Activated B cell treated with CpG ODN at 0.5 μM for 24 hours (primary cell): ENCODE measurements at regions of chr5 and their contacts with region 1.

Region 1: GRCh38 chr5:34838785-34839714 is at the start of gene TTC23L:
- DNase-seq: peak; percentile 88
- ATAC-seq: peak; percentile 89
- H3K4me3 Mint-ChIP-seq: peak within 1 kb of the TSS; percentile 94
- H3K27ac Mint-ChIP-seq: peak within 1 kb of the TSS; percentile 96
- H3K4me1 Mint-ChIP-seq: peaks cover 13% of the 10 kb centered on the region
- H3K27me3 Mint-ChIP-seq: peaks cover 2% of the 10 kb centered on the region
- CTCF ChIP-seq: no peak
- total RNA-seq, gene TTC23L: not detected in 2 replicates

Region 2: DNA sequence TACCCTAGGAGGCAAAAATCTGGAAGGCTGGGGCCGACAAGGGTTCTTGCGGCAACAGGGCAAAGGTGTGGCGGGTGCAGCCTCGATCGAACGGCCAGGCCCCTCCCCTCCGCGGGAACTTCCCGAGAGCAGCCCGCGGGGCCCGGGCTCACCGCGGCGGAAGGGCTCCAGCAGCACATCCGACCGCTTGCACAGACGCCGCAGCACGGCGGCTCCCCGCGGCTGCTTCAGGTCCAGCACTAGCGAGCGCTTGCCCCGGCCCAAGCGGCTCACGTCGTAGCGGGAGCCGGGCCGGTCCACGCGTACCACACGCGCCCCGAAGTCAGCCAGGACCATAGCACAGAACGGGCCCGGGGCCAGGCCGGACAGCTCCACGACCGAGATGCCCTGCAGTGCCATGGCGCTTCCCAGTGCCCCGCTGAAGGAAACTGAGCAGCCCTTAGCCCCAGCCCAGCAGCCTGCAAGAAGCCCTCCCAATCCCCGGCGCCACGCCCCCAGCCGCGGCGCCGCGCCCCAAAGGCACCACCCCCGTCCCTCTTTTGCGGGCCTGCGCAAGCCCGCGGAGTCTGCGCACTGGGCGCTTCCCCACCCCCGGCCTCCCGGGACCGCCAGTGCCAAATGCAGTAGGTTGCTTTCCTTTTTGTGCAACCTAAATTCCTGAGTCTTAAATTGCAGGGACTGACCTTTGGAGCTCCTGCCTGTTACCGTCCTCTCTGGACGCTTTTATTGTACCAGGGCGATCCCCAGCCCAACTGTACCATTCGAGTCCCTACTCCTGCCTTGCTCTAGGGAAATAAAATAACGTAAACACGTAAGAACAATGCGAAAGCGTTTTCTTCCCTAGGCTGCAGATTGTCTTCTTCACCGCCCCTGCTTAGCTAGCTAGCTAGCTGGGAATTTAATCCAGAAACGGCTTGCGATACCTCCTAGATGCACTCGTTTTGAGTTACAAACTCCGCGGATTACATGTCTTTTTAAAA is 831.1 kb before region 1 on chr5 and contains the start of gene AMACR:
- CTCF ChIA-PET with region 1: no interaction called
- POLR2A ChIA-PET with region 1: interaction called, 4 read pairs
- intact Hi-C with region 1: loop called (anchors 1 kb)
- DNase-seq: peak; percentile 90
- ATAC-seq: peak; percentile 92
- H3K4me3 Mint-ChIP-seq: peak within 1 kb of the TSS; percentile 95
- H3K27ac Mint-ChIP-seq: peak within 1 kb of the TSS; percentile 91
- H3K4me1 Mint-ChIP-seq: peaks cover 23% of the 10 kb centered on the region
- H3K27me3 Mint-ChIP-seq: no peaks in the 10 kb centered on the region
- CTCF ChIP-seq: no peak
- total RNA-seq, gene AMACR: 6.0 and 6.5 TPM in 2 replicates

Region 3: GRCh38 chr5:34656001-34656699 is 182.9 kb before region 1 on chr5 and contains the start of gene RAI14:
- CTCF ChIA-PET with region 1: no interaction called
- POLR2A ChIA-PET with region 1: no interaction called
- intact Hi-C with region 1: loop called (anchors 5 kb)
- DNase-seq: peak; percentile 21
- ATAC-seq: peak; percentile 48
- H3K4me3 Mint-ChIP-seq: peak within 1 kb of the TSS; percentile 88
- H3K27ac Mint-ChIP-seq: peak within 1 kb of the TSS; percentile 13
- H3K4me1 Mint-ChIP-seq: peaks cover 20% of the 10 kb centered on the region
- H3K27me3 Mint-ChIP-seq: peaks cover 28% of the 10 kb centered on the region
- CTCF ChIP-seq: no peak
- total RNA-seq, gene RAI14: 1.1 and 1.6 TPM in 2 replicates

Region 4: DNA sequence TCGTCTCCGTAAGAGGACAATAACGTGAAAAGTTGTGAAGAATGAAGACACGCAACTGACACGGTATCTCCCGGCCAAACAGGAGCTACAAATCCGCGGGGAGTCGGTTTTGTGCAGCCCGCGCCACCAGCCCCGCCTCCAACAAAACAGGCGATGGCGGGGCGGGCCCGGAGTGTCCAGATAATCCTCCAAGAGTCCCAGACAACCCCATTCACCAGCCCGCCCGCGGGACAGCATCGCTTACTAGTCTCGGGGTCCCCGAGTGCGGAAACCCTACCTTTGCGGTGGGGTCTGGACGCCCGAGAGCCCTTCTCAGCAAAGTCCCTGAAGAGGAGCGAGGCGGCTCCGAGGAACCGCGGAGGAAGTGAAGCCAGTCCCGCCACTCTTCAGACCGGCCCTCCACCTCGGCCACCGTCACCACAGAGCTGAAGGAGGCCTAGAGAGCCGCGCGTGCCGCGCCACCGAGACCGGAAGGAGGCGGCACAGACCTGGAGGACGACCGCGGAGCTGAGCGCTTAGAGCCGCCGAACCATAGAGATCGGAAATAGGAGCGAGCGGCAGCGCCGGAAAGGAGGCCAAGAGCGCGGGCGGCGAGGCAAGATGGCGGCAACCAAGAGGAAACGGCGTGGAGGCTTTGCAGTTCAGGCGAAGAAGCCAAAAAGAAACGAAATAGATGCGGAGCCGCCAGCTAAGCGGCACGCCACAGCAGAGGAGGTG is 76.2 kb after region 1 on chr5 and contains the starts of genes BRIX1 and RAD1:
- CTCF ChIA-PET with region 1: no interaction called
- POLR2A ChIA-PET with region 1: interaction called, 20 read pairs
- intact Hi-C with region 1: loop called (anchors 1 kb)
- DNase-seq: peak; percentile 92
- ATAC-seq: peak; percentile 98
- H3K4me3 Mint-ChIP-seq: peak within 1 kb of the TSS; percentile 57
- H3K27ac Mint-ChIP-seq: no peak within 1 kb of the TSS
- H3K4me1 Mint-ChIP-seq: peaks cover 34% of the 10 kb centered on the region
- H3K27me3 Mint-ChIP-seq: no peaks in the 10 kb centered on the region
- CTCF ChIP-seq: no peak
- total RNA-seq, gene BRIX1: 40.6 and 42.4 TPM in 2 replicates
- total RNA-seq, gene RAD1: 20.2 and 24.4 TPM in 2 replicates

Region 5: DNA sequence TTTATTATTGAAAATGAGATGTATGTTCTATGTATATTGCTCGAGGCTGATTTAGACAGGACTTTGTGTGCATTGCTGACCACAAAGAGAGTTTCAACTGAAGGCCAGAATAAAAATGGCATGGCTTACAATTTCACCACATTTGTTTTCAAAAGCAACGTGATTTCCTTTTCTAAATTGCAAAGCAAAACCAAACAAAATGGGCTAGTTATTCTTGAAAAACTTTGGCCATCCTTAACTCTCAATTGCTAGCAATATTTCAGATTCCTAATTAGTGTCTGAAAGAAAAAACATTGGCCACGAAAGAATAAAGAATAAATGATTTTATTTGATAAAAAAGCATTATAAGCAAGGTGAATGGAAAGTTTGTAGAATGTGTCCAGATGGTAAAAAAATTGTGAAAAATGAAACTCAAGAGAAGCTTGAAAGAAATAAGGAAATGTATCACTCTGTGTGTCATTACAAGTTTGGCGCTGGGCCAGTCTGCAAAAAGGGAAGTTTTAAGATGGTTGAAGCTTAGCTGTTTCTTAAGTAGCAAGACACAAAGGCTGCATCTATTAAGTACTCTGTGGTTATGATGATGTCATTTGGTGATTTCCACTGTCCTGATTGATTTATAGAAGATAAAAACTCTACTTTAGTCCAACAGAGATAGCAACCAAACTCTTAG is 480.4 kb after region 1 on chr5:
- CTCF ChIA-PET with region 1: no interaction called
- POLR2A ChIA-PET with region 1: no interaction called
- intact Hi-C with region 1: loop called (anchors 5 kb)
- DNase-seq: peak; percentile 44
- ATAC-seq: peak; percentile 96
- H3K4me3 Mint-ChIP-seq: peak overlapping the region; percentile 64
- H3K27ac Mint-ChIP-seq: peak overlapping the region; percentile 87
- H3K4me1 Mint-ChIP-seq: peaks cover 16% of the 10 kb centered on the region
- H3K27me3 Mint-ChIP-seq: no peaks in the 10 kb centered on the region
- CTCF ChIP-seq: no peak